ENCODE measurements at regions of chr4 and their contacts with region 1.

Region 1: DNA sequence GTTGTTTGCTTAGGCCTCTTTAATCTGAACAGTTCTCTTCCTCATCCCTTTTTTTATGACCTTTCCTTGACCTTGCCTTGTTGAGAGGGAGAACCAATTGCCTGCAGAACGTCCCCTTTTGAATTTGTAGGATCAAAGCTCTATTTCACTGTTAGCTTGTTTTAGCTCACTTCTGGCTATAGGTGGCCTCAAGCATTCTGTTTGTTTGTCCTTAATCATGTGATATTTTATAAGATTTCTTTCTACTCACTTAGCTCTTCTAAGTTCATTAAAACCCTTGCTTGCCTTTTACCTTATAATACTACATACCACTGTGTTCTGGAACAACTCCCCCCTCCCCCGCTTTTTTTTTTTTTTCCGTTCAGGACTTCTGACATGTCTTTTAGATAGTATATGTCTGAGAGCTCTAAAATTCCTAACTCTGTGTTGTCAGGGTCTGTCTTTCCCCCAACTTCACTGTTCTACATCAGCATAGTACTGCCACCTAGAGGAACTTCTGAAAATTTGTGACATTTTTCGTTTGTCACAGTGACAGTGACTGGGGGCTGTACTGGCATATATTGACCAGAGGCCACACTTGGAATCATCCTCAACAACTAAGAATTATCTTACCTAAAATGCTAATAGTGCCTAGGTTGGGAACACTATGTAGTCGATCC is 128.5 kb downstream of the LARP7 start:
- DNase-seq: peak; percentile 52
- ATAC-seq: peak; percentile 95
- H3K4me3 ChIP-seq: no peak overlapping the region
- H3K27ac ChIP-seq: no peak overlapping the region
- H3K4me1 ChIP-seq: peaks cover 8% of the 10 kb centered on the region; the same call in 1 of the 2 replicates
- H3K27me3 ChIP-seq: no peaks in the 10 kb centered on the region
- CTCF ChIP-seq: peak; percentile 65
- EP300 ChIP-seq: no peak
- POLR2A ChIP-seq: no peak
- RAD21 ChIP-seq: no peak

Region 2: DNA sequence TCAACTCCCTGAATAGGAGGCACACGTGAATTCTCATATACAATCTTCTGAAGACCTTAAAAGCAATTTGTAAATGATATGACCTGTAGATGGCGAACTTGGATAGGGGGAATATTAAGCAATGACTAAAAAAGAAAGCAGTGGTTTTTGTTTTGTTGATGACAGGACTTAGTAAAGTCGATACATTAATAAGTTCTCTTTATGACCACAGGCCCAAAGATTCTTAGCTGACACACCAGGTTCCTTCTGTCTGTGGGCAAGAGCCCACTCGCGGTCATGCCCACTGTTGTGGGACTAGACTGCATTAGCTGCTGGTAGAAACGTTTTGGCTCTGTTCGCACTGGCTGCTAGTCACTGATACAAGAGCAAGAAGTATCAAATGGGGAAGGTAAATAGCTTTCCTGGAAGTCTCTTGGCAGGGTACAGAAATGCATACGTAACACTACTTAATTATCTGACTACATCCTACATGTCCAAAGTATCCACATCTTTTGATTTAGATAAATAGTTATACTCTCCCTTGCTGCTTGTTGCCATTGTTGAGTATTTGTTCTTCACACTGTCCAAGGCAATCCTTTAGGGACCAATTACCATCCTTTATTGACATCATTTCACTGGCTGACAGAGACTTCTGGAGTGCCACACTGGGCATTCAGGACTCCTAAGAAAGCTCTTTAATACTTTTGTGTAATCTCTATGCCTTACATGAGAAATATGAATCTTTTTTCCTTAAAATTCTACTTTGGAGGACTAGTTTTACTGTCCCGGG is 437.3 kb before region 1 on chr4:
- CTCF ChIA-PET with region 1: no interaction called
- POLR2A ChIA-PET with region 1: no interaction called
- in situ Hi-C with region 1: loop called (anchors 25 kb)
- intact Hi-C with region 1: loop called (anchors 5 kb)
- DNase-seq: peak; percentile 38
- ATAC-seq: peak; percentile 37; the same call in 1 of the 3 replicates
- H3K4me3 ChIP-seq: no peak overlapping the region
- H3K27ac ChIP-seq: no peak overlapping the region
- H3K4me1 ChIP-seq: no peaks in the 10 kb centered on the region
- H3K27me3 ChIP-seq: no peaks in the 10 kb centered on the region
- CTCF ChIP-seq: peak; percentile 61
- EP300 ChIP-seq: no peak
- POLR2A ChIP-seq: no peak
- RAD21 ChIP-seq: peak; percentile 50; the same call in 1 of the 2 replicates

Region 3: GRCh38 chr4:112636688-112637551 is 128.5 kb before region 1 on chr4 and contains the starts of genes LARP7 and ZGRF1:
- CTCF ChIA-PET with region 1: interaction called, 26 read pairs
- POLR2A ChIA-PET with region 1: no interaction called
- in situ Hi-C with region 1: loop called (anchors 5 kb)
- intact Hi-C with region 1: loop called (anchors 1 kb)
- DNase-seq: peak; percentile 97
- ATAC-seq: peak; percentile 95
- H3K4me3 ChIP-seq: peak within 1 kb of the TSS; percentile 72 to 98 (median 83)
- H3K27ac ChIP-seq: peak within 1 kb of the TSS; percentile 85
- H3K4me1 ChIP-seq: peaks cover 16% of the 10 kb centered on the region
- H3K27me3 ChIP-seq: no peaks in the 10 kb centered on the region; a peak in 1 of 5 replicates
- CTCF ChIP-seq: peak; percentile 83
- EP300 ChIP-seq: peak; percentile 15 to 47; a peak in 1 of 4 replicates
- POLR2A ChIP-seq: peak; percentile 52 to 81; a peak in 3 of 4 replicates
- RAD21 ChIP-seq: no peak; the same call in 1 of the 2 replicates
- total RNA-seq, gene LARP7: 37.1 and 49.6 TPM in 2 replicates
- total RNA-seq, gene ZGRF1: 14.0 and 15.9 TPM in 2 replicates